ENCODE measurements at regions of chr11 and their contacts with region 1.

Region 1: DNA sequence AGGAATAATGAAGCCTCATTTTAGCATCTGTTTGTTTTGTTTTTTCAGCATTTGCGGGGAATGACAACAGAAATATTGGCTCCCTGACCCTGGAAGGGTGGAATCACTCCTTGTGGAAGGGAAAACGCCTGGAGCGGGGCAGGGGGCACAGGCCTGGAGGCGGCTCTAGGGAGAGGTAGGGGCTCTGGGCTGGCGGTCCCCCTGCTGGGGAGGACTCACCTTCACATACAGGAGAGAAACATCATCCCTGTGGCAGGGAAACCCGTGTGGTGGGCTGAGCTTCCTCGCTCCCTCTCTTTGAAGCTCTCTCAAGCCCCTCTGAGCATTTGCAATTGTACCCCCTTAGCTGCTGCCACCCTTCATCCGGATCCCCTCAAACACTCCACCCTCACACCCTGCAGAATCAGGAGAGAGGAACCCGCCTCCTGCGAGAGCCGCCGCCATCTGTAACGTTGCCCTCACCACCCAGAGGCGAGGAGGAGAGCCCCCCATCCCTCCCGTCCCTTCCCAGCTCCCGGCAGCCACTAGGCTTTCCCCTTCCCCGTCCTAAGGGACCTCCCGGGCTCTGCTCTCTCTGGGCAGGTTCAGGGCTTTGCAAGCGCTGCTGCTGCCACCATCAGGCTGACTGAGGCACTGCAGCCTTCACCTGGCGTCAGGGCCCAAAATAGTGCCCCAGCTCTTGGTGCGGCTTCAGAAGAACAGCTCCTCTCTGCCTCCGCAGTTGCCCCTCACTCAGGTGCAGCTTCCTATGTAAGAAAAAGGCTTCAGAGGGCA is 10.4 kb downstream of the KIRREL3 start:
- DNase-seq: no peak
- H3K4me3 ChIP-seq: peak overlapping the region; percentile 44
- CTCF ChIP-seq: peak; percentile 95

Region 2: DNA sequence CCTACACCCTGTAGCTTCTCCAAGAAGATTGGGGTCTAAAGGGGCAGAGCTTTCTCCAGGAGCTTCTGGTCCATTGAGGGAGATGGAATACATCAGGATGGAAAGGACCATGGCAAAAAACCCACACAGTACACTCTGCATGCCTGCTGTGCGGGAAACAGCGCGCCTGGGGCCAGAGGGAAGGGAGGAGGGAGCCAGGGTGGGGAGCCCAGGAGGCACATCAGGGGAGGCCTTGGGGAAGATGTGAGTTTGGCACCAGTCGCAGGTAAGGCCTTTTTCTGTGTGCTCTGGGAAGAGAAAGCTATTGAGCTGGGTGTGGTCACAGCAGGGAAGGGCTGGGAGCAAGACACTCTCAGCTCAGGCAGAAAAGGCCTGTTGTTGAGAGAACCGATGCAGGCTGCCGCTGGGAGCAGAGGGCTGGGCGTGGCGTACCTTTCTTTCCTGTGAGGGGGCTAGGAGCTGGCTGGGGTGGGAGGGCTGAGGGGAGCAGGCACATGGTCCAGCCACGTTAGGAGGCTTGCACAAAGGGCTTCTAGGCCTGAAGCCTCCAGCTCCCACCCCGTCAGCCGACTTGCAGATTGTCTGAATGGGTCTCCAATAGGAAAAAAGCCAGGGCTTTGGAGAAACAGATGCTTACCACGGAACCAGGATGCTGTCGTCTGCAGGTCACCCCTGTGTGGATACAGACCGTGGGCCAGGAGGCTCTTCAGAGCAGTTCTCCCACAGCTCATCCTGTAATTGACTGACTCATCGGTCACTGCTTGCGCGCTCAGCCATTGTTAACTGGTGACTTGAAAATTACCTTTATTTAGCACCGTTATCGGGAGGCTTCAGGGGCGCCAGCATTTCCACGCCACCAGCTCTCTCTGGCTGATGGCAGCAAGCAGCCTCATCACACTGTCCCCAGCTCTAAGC is 397.4 kb before region 1 on chr11:
- CTCF ChIA-PET with region 1: interaction called, 22 read pairs
- POLR2A ChIA-PET with region 1: no interaction called
- DNase-seq: no peak
- H3K4me3 ChIP-seq: no peak overlapping the region
- CTCF ChIP-seq: no peak

Region 3: GRCh38 chr11:126716456-126717083 is 273.6 kb before region 1 on chr11:
- CTCF ChIA-PET with region 1: interaction called, 125 read pairs
- POLR2A ChIA-PET with region 1: no interaction called
- DNase-seq: no peak
- H3K4me3 ChIP-seq: no peak overlapping the region
- CTCF ChIP-seq: peak; percentile 67

Region 4: DNA sequence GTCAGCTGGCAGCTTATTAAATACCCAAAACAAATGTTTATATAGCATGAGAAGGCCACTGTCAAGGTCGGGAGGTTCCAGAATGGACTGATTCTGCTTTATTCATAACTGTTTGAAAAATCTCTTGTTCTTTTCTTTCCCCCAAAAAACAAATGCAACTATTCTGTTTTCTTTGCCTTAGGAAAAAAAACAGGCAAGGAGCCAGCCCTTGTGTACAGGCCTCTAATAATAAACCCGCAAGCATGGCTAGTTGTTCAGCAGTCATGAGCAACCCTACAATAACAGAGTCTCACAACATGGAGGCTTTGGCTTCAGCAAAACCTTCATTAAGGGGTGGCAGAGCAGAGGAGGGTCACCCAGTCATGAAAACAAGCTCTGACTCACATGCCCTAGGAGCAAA is 181.3 kb before region 1 on chr11:
- CTCF ChIA-PET with region 1: interaction called, 15 read pairs
- POLR2A ChIA-PET with region 1: interaction called, 3 read pairs
- DNase-seq: no peak
- H3K4me3 ChIP-seq: no peak overlapping the region
- CTCF ChIP-seq: no peak

Region 5: DNA sequence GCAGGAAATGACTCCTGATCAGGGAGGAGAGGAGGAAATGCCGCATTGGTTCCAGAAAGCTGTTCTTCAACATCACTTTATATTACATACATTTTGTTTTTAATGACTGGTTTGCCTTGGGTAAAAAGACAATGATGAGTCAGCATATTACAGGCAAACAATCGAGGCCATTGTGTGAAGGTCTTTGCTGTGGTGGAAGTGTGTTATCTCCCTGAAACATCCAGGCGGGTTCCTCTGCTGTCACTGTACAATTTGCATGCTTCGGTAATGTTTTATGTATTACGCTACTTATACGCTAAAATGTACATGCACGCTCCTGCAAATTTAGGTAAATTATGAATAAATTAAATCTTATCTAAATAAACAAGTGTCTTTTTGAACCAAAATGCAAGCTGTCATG is 150.6 kb before region 1 on chr11:
- CTCF ChIA-PET with region 1: interaction called, 16 read pairs
- POLR2A ChIA-PET with region 1: no interaction called
- DNase-seq: no peak
- H3K4me3 ChIP-seq: no peak overlapping the region
- CTCF ChIP-seq: no peak

Region 6: GRCh38 chr11:126978911-126979310 is 11.2 kb before region 1 on chr11:
- CTCF ChIA-PET with region 1: interaction called, 90 read pairs
- POLR2A ChIA-PET with region 1: no interaction called
- DNase-seq: no peak
- H3K4me3 ChIP-seq: no peak overlapping the region
- CTCF ChIP-seq: no peak

Measured in AG04449 (cell line).